CD8-positive, alpha-beta memory T cell (primary cell): ENCODE measurements at regions of chr11 and their contacts with region 1.

Region 1: DNA sequence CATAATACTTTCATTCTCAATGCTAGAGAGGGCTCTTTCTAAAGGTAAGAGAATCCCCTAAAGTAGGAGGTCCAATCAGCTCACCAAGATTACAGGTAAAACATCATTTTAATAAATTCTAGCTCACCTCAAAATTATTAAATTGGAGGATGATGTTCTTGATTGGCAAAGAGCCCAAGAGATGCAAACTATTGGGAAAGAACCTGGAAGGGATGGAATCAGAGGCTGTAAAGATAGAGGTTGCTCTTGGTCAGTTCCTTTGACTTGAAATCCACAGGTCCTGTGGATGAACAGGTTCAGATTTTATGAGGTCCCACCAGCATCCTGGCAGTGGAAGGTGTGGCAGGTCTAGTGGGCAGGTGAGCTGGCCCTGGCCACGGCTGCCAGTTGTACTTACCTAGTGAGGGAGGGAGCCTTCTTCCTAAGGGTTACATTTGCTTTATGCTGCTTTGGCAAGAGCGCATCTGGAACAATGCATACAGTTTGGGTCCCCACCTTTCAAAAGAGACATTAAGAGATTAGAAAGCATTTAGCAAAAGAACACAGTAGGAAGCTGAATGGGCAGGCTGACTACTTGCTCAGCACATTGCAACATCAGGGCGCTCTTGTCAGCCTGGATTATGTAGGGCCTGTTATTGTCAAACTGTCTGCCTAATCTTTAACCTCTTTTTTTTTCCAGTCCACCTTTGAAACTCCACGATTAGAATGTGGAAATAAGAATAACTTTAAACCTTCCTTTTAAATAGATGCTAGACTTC is 97.1 kb downstream of the RDX start:
- DNase-seq: no peak
- H3K4me3 ChIP-seq: no peak overlapping the region
- H3K4me3 Mint-ChIP-seq: no peak overlapping the region
- H3K27ac ChIP-seq: no peak overlapping the region
- H3K27ac Mint-ChIP-seq: peak overlapping the region in 1 of 8 donors; percentile 13
- H3K4me1 ChIP-seq: no peaks in the 10 kb centered on the region
- H3K4me1 Mint-ChIP-seq: no peaks in the 10 kb centered on the region
- H3K27me3 ChIP-seq: no peaks in the 10 kb centered on the region
- H3K27me3 Mint-ChIP-seq: no peaks in the 10 kb centered on the region

Region 2: DNA sequence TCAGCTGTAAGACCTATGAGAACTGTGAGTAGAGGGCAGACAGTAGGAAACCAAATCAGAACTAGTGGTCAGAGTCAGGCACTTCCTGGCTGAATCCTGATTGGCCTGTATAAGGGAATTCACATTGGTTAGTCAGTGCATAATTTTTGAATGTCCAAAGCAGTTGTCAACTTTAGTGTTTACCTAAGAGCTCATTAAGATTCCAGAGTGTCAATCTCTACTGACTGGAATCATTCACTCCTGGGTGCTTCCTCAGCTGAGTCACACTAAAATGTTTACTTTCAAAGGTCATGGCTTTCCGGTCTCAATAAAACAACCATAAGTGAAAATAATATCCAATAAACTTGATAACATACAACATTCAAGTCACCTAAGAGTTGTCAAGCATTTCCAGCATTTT is 471.3 kb before region 1 on chr11:
- CTCF ChIA-PET with region 1: no interaction called
- POLR2A ChIA-PET with region 1: no interaction called
- DNase-seq: no peak
- H3K4me3 ChIP-seq: no peak overlapping the region
- H3K4me3 Mint-ChIP-seq: no peak overlapping the region
- H3K27ac ChIP-seq: no peak overlapping the region
- H3K27ac Mint-ChIP-seq: no peak overlapping the region
- H3K4me1 ChIP-seq: no peaks in the 10 kb centered on the region
- H3K4me1 Mint-ChIP-seq: no peaks in the 10 kb centered on the region
- H3K27me3 ChIP-seq: no peaks in the 10 kb centered on the region
- H3K27me3 Mint-ChIP-seq: no peaks in the 10 kb centered on the region

Region 3: DNA sequence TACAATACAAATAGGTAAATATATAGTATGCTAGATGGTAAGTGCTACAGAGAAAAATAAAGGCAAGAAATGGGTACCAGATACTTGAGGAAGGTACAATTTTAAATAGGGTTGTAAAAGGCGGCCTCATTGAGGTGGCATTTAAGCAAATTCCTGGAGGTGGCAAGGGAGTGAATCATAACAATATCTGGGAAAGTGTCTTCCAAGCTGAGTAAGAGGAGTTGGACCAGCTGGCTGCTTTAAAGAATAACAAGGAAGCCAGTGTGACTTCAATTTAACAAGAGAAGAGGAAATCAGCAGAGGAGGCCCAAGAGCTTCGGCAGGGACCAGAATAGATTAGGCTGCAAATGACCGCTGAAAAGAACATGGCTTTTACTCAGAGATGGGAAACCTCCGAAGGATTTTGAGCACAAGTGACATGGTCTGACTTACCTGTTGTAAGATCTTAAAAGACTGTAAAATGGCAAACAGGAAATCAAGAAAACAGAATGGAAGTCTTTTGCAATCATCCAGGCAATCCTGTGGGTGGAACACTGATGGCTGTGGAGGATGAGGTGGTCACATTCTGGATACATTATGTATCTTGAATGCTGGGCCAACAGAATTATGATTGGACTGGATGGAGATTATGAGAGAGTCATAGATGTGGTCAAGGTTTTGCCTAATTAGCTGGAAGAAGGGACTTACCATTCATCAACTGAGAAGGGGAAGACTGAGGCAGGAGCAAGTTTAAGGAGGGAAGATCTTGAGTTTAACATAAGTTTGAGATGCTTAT is 19.8 kb after region 1 on chr11:
- CTCF ChIA-PET with region 1: no interaction called
- POLR2A ChIA-PET with region 1: no interaction called
- DNase-seq: no peak
- H3K4me3 ChIP-seq: no peak overlapping the region
- H3K4me3 Mint-ChIP-seq: no peak overlapping the region
- H3K27ac ChIP-seq: no peak overlapping the region
- H3K27ac Mint-ChIP-seq: no peak overlapping the region
- H3K4me1 ChIP-seq: no peaks in the 10 kb centered on the region
- H3K4me1 Mint-ChIP-seq: no peaks in the 10 kb centered on the region
- H3K27me3 ChIP-seq: no peaks in the 10 kb centered on the region
- H3K27me3 Mint-ChIP-seq: no peaks in the 10 kb centered on the region

Region 4: DNA sequence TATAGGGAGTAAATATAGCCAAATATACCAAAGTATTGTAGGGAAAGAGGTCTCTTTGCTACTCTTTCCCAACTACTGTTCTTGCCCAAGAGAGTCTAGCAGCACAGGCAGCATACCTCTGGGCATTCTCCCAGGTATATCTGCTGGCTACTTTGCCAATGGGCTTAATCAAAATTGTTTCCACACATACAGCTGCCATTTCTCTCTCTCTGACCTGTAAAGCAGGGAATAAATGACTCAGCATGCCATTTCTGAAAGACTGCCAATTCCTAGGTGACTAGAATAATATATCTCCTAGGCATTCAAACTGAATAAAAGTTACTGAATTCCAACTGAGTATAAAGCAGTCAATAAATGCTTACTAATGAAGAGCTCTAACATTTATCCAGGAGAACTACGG is 52.5 kb after region 1 on chr11:
- CTCF ChIA-PET with region 1: interaction called, 10 read pairs
- POLR2A ChIA-PET with region 1: no interaction called
- DNase-seq: no peak
- H3K4me3 ChIP-seq: no peak overlapping the region
- H3K4me3 Mint-ChIP-seq: no peak overlapping the region
- H3K27ac ChIP-seq: no peak overlapping the region
- H3K27ac Mint-ChIP-seq: peak overlapping the region in 1 of 8 donors; percentile 54
- H3K4me1 ChIP-seq: no peaks in the 10 kb centered on the region
- H3K4me1 Mint-ChIP-seq: no peaks in the 10 kb centered on the region
- H3K27me3 ChIP-seq: no peaks in the 10 kb centered on the region
- H3K27me3 Mint-ChIP-seq: no peaks in the 10 kb centered on the region

Region 5: DNA sequence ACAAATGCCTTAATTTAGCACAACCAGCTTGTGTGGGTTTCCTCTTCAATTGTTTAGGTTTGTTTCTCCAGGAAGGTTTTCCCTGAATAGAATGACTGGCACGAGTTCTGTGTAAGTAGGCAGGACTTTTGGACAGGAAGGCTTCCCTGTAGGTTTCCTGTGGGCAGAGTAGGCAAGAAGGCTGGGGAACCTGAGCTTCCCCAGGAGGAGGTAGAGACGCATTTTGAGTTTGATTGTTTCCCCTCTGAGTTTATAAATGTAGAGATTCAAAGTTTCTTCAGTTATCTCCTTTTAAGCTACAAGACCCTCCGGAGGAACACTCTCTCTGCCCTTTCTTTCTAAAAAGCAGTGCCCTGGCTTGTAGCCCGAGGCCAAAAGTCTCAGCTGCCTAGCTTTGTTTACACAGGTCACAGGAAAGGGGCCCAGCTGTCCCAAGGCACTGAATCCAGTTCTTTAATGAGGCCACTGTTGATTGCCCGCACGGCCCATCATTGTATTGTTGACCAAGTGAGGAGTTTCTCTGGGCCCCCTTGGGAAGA is 163.7 kb after region 1 on chr11:
- CTCF ChIA-PET with region 1: interaction called, 38 read pairs
- POLR2A ChIA-PET with region 1: no interaction called
- DNase-seq: no peak
- H3K4me3 ChIP-seq: no peak overlapping the region
- H3K4me3 Mint-ChIP-seq: no peak overlapping the region
- H3K27ac ChIP-seq: no peak overlapping the region
- H3K27ac Mint-ChIP-seq: no peak overlapping the region
- H3K4me1 ChIP-seq: no peaks in the 10 kb centered on the region
- H3K4me1 Mint-ChIP-seq: no peaks in the 10 kb centered on the region
- H3K27me3 ChIP-seq: no peaks in the 10 kb centered on the region
- H3K27me3 Mint-ChIP-seq: no peaks in the 10 kb centered on the region

Region 6: DNA sequence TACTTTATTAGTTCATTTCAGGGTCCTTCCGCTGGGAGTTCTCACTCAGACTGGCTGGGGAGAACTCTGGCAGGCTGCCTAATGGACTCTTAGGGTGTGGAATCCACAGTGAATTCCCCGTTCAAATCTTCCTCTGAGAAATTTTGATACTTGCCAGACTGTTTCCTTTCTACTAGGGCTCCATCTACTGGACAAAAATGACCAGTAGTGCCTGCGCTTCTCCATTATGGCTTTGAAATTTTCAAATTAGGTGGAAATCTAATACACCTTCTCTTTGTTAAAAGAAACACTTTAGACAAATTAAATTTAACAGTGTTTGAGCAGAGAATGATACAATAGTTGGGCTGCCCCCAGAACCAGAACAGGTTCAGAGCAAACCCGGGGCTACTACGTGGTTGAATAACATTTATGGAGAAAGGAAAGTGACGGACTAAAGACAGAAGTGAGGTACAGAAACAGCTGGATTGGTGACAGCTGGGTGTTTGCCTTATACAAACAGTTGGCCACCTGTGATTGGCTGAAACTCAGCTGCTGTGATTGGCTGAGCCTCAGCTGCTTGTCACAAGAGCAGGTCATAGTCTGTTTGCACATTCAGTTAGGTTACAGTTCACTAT is 177.5 kb after region 1 on chr11:
- CTCF ChIA-PET with region 1: interaction called, 20 read pairs
- POLR2A ChIA-PET with region 1: no interaction called
- DNase-seq: peak in 2 of 5 donors; percentile 22 to 27
- H3K4me3 ChIP-seq: no peak overlapping the region
- H3K4me3 Mint-ChIP-seq: peak overlapping the region in 1 of 7 donors; percentile 1
- H3K27ac ChIP-seq: no peak overlapping the region
- H3K27ac Mint-ChIP-seq: no peak overlapping the region
- H3K4me1 ChIP-seq: no peaks in the 10 kb centered on the region
- H3K4me1 Mint-ChIP-seq: peaks cover 2 to 11% (median 5%) of the 10 kb centered on the region in 3 donors
- H3K27me3 ChIP-seq: no peaks in the 10 kb centered on the region
- H3K27me3 Mint-ChIP-seq: peaks cover 3% of the 10 kb centered on the region in 2 donors

Region 7: DNA sequence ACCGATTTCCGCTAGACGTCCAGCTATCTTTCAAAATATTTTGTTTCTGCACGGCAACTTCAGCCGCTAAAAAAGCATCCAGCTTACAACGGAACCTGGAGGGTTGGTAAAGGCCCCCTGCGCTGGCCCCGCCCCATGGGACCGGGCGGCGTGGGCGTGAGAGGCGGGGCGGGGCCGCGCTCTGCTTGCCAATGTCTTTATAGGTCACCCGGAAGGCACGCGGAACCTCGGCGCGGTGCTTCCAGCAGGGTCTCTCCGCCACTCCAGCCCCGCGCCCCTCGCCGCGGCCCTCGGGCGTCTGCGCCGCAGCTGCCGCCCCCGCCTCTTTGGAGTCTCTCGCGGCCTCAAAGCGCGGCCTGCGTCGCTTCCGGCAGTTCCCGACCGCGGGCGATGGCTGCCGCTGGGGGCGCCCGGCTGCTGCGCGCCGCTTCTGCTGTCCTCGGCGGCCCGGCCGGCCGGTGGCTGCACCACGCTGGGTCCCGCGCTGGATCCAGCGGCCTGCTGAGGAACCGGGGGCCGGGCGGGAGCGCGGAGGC is 230.4 kb after region 1 on chr11 and contains the start of gene FDX1:
- CTCF ChIA-PET with region 1: interaction called, 43 read pairs
- POLR2A ChIA-PET with region 1: no interaction called
- DNase-seq: peak; percentile 73 to 87 (median 81)
- H3K4me3 ChIP-seq: peak within 1 kb of the TSS; percentile 89
- H3K4me3 Mint-ChIP-seq: peak within 1 kb of the TSS; percentile 97 to 99 (median 98)
- H3K27ac ChIP-seq: peak within 1 kb of the TSS; percentile 74
- H3K27ac Mint-ChIP-seq: peak within 1 kb of the TSS; percentile 92 to 99 (median 98)
- H3K4me1 ChIP-seq: peaks cover 33% of the 10 kb centered on the region
- H3K4me1 Mint-ChIP-seq: peaks cover 44 to 51% (median 49%) of the 10 kb centered on the region in 3 donors
- H3K27me3 ChIP-seq: no peaks in the 10 kb centered on the region
- H3K27me3 Mint-ChIP-seq: no peaks in the 10 kb centered on the region
- total RNA-seq, gene FDX1: 13.8 to 14.4 TPM